Mammary epithelial cell (primary cell): ENCODE measurements at regions of chr20 and their contacts with region 1.

Region 1: GRCh38 chr20:62386383-62387218 is at the start of gene RPS21:
- DNase-seq: peak; percentile 85
- H3K4me3 ChIP-seq: peak within 1 kb of the TSS; percentile 90 to 100 (median 92)
- H3K27ac ChIP-seq: peak within 1 kb of the TSS; percentile 66
- H3K4me1 ChIP-seq: peaks cover 19% of the 10 kb centered on the region
- H3K27me3 ChIP-seq: no peaks in the 10 kb centered on the region
- CTCF ChIP-seq: no peak
- total RNA-seq, gene RPS21: 894 to 1,553 TPM

Region 2: GRCh38 chr20:62143118-62143973 is 243.3 kb before region 1 on chr20 and contains the starts of genes PSMA7 and SS18L1:
- CTCF ChIA-PET with region 1: no interaction called
- dilution Hi-C with region 1: no loop called
- in situ Hi-C with region 1: no loop called
- intact Hi-C with region 1: loop called (anchors 10 kb)
- DNase-seq: peak; percentile 86
- H3K4me3 ChIP-seq: peak within 1 kb of the TSS; percentile 78 to 83 (median 81)
- H3K27ac ChIP-seq: peak within 1 kb of the TSS; percentile 67
- H3K4me1 ChIP-seq: peaks cover 23% of the 10 kb centered on the region
- H3K27me3 ChIP-seq: no peaks in the 10 kb centered on the region
- CTCF ChIP-seq: no peak
- total RNA-seq, gene PSMA7: 173 to 303 TPM
- total RNA-seq, gene SS18L1: 16.3 to 20.6 TPM

Region 3: GRCh38 chr20:62246872-62247665 is 139.5 kb before region 1 on chr20:
- CTCF ChIA-PET with region 1: no interaction called
- dilution Hi-C with region 1: no loop called
- in situ Hi-C with region 1: no loop called
- intact Hi-C with region 1: loop called (anchors 10 kb)
- DNase-seq: no peak
- H3K4me3 ChIP-seq: no peak overlapping the region
- H3K27ac ChIP-seq: no peak overlapping the region
- H3K4me1 ChIP-seq: peaks cover 10% of the 10 kb centered on the region
- H3K27me3 ChIP-seq: no peaks in the 10 kb centered on the region
- CTCF ChIP-seq: no peak

Region 4: DNA sequence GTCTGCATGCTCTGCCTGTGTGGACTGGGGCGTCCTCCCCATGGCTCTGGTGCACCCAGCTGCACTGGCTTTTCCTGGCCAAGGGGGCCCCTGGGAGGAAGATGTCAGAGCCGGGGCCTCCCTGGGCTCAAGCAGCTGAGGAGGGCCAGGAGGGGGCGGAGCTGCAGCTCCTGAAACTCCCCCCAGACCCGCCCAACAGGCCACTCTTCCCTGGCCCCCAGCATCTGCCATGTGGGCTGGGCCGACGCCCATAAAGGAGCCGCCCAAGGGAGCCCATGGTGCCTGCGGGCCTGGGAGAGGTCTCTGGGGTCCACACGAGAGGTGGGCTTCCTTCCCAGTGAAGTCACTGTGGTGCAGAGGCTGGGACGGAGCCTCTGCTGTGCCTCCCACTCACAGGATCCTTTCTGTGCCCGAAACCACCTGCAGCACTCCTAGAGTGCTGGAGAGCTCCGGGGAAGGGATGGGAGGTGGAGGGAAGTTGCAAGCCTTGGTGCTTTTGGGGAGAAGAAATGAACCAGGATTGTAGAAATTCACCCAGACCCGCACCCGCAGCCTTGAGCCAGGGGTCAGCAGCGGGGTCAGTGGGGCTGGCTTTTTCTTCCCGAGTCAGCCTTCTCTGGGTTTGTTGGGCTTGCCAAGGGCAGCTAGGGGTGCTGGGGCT is 36.9 kb after region 1 on chr20:
- CTCF ChIA-PET with region 1: no interaction called
- dilution Hi-C with region 1: no loop called
- in situ Hi-C with region 1: no loop called
- intact Hi-C with region 1: no loop called
- DNase-seq: no peak
- H3K4me3 ChIP-seq: no peak overlapping the region
- H3K27ac ChIP-seq: no peak overlapping the region
- H3K4me1 ChIP-seq: peaks cover 16% of the 10 kb centered on the region
- H3K27me3 ChIP-seq: no peaks in the 10 kb centered on the region
- CTCF ChIP-seq: no peak

Region 5: GRCh38 chr20:62616728-62617621 is 230.4 kb after region 1 on chr20:
- CTCF ChIA-PET with region 1: interaction called, 9 read pairs
- dilution Hi-C with region 1: no loop called
- in situ Hi-C with region 1: loop called in 1 of 2 experiments (anchors 25 kb)
- intact Hi-C with region 1: loop called (anchors 5 kb)
- DNase-seq: peak; percentile 26
- H3K4me3 ChIP-seq: no peak overlapping the region
- H3K27ac ChIP-seq: no peak overlapping the region
- H3K4me1 ChIP-seq: no peaks in the 10 kb centered on the region
- H3K27me3 ChIP-seq: no peaks in the 10 kb centered on the region
- CTCF ChIP-seq: peak; percentile 84 to 99

Region 6: DNA sequence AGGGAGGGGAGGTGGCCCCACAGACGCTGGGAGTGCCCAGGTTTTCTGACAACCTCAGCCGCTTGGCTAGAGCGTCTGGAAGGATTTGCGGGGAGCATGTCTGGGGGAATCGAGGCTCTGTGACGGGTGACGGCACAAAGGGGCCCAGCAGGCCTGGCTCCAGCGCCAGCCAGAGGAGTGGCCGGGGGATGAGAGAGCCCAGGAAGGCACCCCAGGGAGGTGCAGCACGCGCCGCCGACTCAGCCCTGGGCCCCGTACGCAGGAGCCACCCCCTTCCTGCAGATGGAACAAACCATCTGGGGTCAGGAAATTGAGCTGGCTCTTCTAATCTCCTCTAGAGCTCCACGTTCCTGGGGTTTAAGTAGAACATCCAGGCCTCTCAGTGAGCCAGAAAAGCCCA is 249.8 kb after region 1 on chr20:
- CTCF ChIA-PET with region 1: no interaction called
- dilution Hi-C with region 1: no loop called
- in situ Hi-C with region 1: no loop called
- intact Hi-C with region 1: no loop called
- DNase-seq: no peak
- H3K4me3 ChIP-seq: no peak overlapping the region
- H3K27ac ChIP-seq: no peak overlapping the region
- H3K4me1 ChIP-seq: no peaks in the 10 kb centered on the region
- H3K27me3 ChIP-seq: peaks cover 12% of the 10 kb centered on the region
- CTCF ChIP-seq: no peak